ENCODE measurements at regions of chr1 and their contacts with region 1.

Region 1: DNA sequence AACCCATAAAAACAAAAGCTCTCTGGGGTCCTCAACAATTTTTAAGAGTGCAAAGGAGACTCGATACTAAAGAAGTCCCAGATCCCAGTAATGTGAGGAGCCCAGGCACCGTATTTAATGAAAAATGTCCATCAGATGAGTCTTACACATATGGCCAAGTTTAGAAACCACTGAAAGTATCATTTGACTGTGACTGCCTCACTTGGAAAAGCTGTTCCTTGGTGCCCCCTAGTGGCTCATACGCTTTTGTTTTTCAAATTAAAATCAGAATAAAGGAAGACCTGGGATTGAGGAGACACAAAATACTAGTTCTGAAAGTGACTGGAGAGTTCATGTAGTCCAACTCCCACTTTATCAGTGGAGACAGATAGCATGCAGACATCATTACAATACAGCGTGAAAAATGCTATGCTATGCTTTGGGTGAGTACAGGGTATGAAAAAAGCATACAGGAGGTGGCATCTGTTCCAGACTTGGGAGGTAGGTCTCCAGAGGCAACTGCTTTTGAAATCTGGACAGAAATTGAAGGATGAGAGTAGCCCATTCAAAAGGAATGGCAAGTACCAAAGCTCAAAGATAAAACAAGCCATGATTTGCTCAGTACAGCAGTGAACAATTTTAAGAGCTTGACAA is 33.8 kb downstream of the GDAP2 start:
- DNase-seq: peak; percentile 52
- H3K27ac ChIP-seq: no peak overlapping the region
- CTCF ChIP-seq: peak; percentile 78

Region 2: DNA sequence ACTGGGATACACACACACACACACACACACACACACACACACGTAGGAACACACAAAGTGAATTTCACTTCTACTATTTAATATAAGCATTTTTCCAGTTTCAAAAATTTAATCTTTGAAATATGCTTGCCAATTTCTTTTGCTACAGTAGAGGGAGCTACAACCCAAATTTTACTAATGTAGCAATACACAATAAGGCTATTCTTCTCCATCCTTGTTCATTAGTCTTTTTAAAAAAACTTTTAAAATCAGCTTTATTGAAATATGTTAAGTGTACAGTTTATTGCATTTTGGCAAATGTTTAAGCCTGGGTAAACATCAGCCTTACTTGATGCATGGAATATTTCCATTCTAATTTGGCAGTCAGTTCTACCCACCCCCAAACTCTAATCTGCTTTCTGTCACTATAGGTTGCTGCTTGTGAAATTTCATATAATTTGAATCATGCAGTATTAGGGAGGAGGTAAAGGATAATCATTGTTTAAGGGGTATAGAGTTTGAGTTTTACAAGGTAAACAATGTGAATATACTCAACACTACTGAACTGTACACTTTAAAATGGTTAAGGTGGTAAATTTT is 382.8 kb before region 1 on chr1:
- CTCF ChIA-PET with region 1: interaction called, 15 read pairs
- POLR2A ChIA-PET with region 1: no interaction called
- DNase-seq: peak; percentile 25
- H3K27ac ChIP-seq: no peak overlapping the region
- CTCF ChIP-seq: peak; percentile 66

Region 3: DNA sequence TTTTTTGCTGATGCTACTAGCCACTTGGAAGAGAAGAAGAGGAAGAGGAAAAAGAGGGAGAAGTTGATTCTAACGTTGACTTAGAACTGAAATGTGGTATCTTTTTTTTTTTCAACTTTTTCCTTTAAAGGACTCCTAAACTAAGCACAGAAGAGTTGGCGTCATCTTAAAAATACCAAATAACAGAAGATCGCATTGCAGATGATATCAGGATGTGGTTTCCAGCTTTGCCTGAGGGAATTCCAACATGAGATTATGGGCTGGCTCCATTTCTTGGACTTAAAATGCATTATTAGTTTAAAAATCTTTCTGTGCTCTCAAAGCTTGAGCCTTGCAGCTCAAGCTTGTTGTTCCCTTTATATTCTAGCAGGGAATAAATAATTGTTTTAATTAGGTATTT is 63.8 kb after region 1 on chr1:
- CTCF ChIA-PET with region 1: no interaction called
- POLR2A ChIA-PET with region 1: no interaction called
- DNase-seq: no peak
- H3K27ac ChIP-seq: no peak overlapping the region
- CTCF ChIP-seq: no peak